ENCODE measurements at regions of chr2 and their contacts with region 1.

Region 1: GRCh38 chr2:206800506-206801417 is 35.4 kb downstream of the FASTKD2 start:
- DNase-seq: peak; percentile 67
- ATAC-seq: peak; percentile 89
- H3K4me3 ChIP-seq: no peak overlapping the region
- H3K27ac ChIP-seq: no peak overlapping the region
- H3K4me1 ChIP-seq: no peaks in the 10 kb centered on the region
- H3K27me3 ChIP-seq: no peaks in the 10 kb centered on the region
- CTCF ChIP-seq: peak; percentile 84

Region 2: GRCh38 chr2:206657087-206657486 is 143.7 kb before region 1 on chr2:
- CTCF ChIA-PET with region 1: no interaction called
- POLR2A ChIA-PET with region 1: no interaction called
- in situ Hi-C with region 1: no loop called
- intact Hi-C with region 1: no loop called
- DNase-seq: no peak
- ATAC-seq: no peak
- H3K4me3 ChIP-seq: no peak overlapping the region
- H3K27ac ChIP-seq: no peak overlapping the region
- H3K4me1 ChIP-seq: no peaks in the 10 kb centered on the region
- H3K27me3 ChIP-seq: no peaks in the 10 kb centered on the region; the same call in 1 of the 2 replicates
- CTCF ChIP-seq: no peak

Region 3: GRCh38 chr2:206774871-206775270 is 25.9 kb before region 1 on chr2:
- CTCF ChIA-PET with region 1: no interaction called
- POLR2A ChIA-PET with region 1: no interaction called
- in situ Hi-C with region 1: no loop called
- intact Hi-C with region 1: no loop called
- DNase-seq: no peak
- ATAC-seq: no peak
- H3K4me3 ChIP-seq: no peak overlapping the region
- H3K27ac ChIP-seq: no peak overlapping the region
- H3K4me1 ChIP-seq: no peaks in the 10 kb centered on the region
- H3K27me3 ChIP-seq: no peaks in the 10 kb centered on the region
- CTCF ChIP-seq: no peak

Region 4: DNA sequence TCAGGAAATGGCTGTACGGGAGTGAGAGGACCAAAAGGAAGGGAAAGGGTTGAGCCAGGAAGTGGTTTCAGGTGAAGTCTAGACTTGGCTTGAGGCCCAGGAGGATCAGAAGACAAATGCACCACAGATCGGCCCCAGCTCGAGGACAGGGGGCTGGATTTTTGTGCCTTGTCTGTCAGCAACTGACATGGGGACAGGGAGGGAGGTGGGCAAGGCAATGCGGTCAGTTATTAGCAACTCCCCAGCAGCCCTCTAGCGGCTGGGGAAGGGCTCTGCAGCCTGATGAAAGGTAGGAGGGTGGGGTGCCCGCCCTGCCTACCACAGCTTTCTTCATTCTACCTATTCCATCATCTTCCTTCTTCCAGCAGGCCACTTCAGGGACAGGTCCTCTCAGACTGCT is 188.5 kb after region 1 on chr2:
- CTCF ChIA-PET with region 1: no interaction called
- POLR2A ChIA-PET with region 1: no interaction called
- in situ Hi-C with region 1: no loop called
- intact Hi-C with region 1: loop called (anchors 2 kb)
- DNase-seq: no peak
- ATAC-seq: peak; percentile 86
- H3K4me3 ChIP-seq: no peak overlapping the region
- H3K27ac ChIP-seq: no peak overlapping the region; the same call in 1 of the 2 replicates
- H3K4me1 ChIP-seq: no peaks in the 10 kb centered on the region; the same call in 1 of the 2 replicates
- H3K27me3 ChIP-seq: no peaks in the 10 kb centered on the region
- CTCF ChIP-seq: peak; percentile 85

Region 5: GRCh38 chr2:207166039-207166348 is 365.2 kb after region 1 on chr2:
- CTCF ChIA-PET with region 1: no interaction called
- POLR2A ChIA-PET with region 1: no interaction called
- in situ Hi-C with region 1: no loop called
- intact Hi-C with region 1: loop called (anchors 10 kb)
- DNase-seq: peak; percentile 97
- ATAC-seq: peak; percentile 89
- H3K4me3 ChIP-seq: peak overlapping the region; percentile 72 to 74
- H3K27ac ChIP-seq: no peak overlapping the region
- H3K4me1 ChIP-seq: peaks cover 32% of the 10 kb centered on the region
- H3K27me3 ChIP-seq: no peaks in the 10 kb centered on the region
- CTCF ChIP-seq: no peak

Region 6: GRCh38 chr2:207474863-207475485 is 674.2 kb after region 1 on chr2:
- CTCF ChIA-PET with region 1: interaction called, 4 read pairs
- POLR2A ChIA-PET with region 1: no interaction called
- in situ Hi-C with region 1: no loop called
- intact Hi-C with region 1: loop called (anchors 1 kb)
- DNase-seq: no peak
- ATAC-seq: no peak
- H3K4me3 ChIP-seq: no peak overlapping the region
- H3K27ac ChIP-seq: no peak overlapping the region
- H3K4me1 ChIP-seq: peaks cover 4% of the 10 kb centered on the region; the same call in 1 of the 2 replicates
- H3K27me3 ChIP-seq: no peaks in the 10 kb centered on the region
- CTCF ChIP-seq: peak; percentile 70; the same call in 1 of the 2 replicates

Measured in Panc1 (cell line).